Activated CD4-positive, alpha-beta memory T cell treated with anti-CD3 and anti-CD28 coated beads for 36 hours (primary cell): ENCODE measurements at regions of chr2 and their contacts with region 1.

Region 1: DNA sequence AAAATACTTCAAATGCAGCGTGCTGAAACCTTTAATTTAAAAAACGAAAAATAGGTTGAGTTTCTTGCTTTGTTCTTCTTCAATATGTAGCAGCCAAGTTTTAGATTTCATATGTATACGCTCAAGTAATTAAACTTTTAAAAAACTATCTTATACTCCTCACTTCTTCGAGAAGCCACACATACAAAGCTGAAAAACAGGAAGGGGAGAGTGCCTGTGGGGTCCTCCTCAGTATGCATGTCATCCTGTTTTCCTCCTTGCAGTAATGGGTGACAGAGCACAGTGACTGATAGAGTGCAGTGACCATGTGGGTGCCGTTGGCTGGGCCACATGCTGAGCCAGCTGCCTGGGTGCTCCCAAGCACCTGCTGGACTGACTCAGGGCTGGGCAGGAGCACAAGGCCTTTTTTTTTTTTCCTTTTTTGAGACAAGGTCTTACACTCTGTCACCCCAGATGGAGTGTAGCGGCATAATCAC is 33.3 kb downstream of the UXS1 start:
- DNase-seq: peak; percentile 73
- H3K4me3 Mint-ChIP-seq: peak overlapping the region; percentile 80
- H3K27ac Mint-ChIP-seq: peak overlapping the region; percentile 91
- H3K4me1 Mint-ChIP-seq: peaks cover 85% of the 10 kb centered on the region
- H3K27me3 Mint-ChIP-seq: no peaks in the 10 kb centered on the region

Region 2: DNA sequence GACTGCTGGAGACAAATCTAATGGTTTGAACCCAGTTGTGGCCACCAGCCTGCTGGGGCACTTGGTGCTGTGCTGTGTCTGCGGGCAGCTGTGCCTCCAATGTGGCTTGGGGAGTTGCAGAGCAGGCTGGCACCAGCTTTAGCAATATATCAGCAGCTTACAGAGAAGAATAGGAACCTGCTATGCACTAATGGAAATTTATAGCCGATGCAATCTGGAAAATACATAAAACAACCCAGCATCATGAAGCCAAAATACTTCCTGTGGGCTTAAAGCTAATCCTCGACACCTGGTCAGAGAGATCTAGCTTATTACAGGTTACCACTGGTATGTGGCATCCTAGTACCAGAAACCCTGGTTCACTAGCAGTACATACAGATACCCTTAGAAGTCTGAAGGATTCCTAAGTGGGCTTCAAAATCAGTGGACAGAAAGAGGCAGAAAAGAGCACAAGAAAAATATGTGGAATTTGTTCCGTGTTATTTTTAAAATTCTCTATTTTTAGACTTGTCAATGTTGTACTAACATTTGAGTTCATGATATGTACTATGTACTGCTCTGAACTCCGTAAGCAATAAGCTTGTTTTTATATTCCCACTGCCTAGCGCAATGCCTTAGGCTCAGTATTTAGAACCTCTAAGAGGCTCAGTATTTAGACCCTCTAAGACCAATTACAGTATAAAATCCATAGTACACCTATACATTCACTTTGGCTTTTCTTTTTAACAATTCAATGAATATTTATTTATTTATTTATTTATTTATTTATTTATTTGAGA is 161.4 kb before region 1 on chr2:
- CTCF ChIA-PET with region 1: no interaction called
- POLR2A ChIA-PET with region 1: no interaction called
- intact Hi-C with region 1: no loop called
- DNase-seq: no peak
- H3K4me3 Mint-ChIP-seq: no peak overlapping the region
- H3K27ac Mint-ChIP-seq: no peak overlapping the region
- H3K4me1 Mint-ChIP-seq: no peaks in the 10 kb centered on the region
- H3K27me3 Mint-ChIP-seq: peaks cover 1% of the 10 kb centered on the region

Region 3: GRCh38 chr2:106124905-106125405 is 35.9 kb before region 1 on chr2:
- CTCF ChIA-PET with region 1: interaction called, 3 read pairs
- POLR2A ChIA-PET with region 1: interaction called, 3 read pairs
- intact Hi-C with region 1: loop called (anchors 5 kb)
- DNase-seq: no peak
- H3K4me3 Mint-ChIP-seq: no peak overlapping the region
- H3K27ac Mint-ChIP-seq: no peak overlapping the region
- H3K4me1 Mint-ChIP-seq: peaks cover 31% of the 10 kb centered on the region
- H3K27me3 Mint-ChIP-seq: no peaks in the 10 kb centered on the region

Region 4: GRCh38 chr2:106137731-106138521 is 22.9 kb before region 1 on chr2:
- CTCF ChIA-PET with region 1: interaction called, 50 read pairs
- POLR2A ChIA-PET with region 1: interaction called, 45 read pairs
- intact Hi-C with region 1: no loop called
- DNase-seq: peak; percentile 44
- H3K4me3 Mint-ChIP-seq: peak overlapping the region; percentile 78
- H3K27ac Mint-ChIP-seq: peak overlapping the region; percentile 91
- H3K4me1 Mint-ChIP-seq: peaks cover 51% of the 10 kb centered on the region
- H3K27me3 Mint-ChIP-seq: no peaks in the 10 kb centered on the region

Region 5: GRCh38 chr2:106147159-106147558 is 13.7 kb before region 1 on chr2:
- CTCF ChIA-PET with region 1: interaction called, 50 read pairs
- POLR2A ChIA-PET with region 1: interaction called, 35 read pairs
- intact Hi-C with region 1: loop called (anchors 1 kb)
- DNase-seq: no peak
- H3K4me3 Mint-ChIP-seq: no peak overlapping the region
- H3K27ac Mint-ChIP-seq: peak overlapping the region; percentile 85
- H3K4me1 Mint-ChIP-seq: peaks cover 51% of the 10 kb centered on the region
- H3K27me3 Mint-ChIP-seq: no peaks in the 10 kb centered on the region